GM12878 (cell line): ENCODE measurements at regions of chr10 and their contacts with region 1.

Region 1: DNA sequence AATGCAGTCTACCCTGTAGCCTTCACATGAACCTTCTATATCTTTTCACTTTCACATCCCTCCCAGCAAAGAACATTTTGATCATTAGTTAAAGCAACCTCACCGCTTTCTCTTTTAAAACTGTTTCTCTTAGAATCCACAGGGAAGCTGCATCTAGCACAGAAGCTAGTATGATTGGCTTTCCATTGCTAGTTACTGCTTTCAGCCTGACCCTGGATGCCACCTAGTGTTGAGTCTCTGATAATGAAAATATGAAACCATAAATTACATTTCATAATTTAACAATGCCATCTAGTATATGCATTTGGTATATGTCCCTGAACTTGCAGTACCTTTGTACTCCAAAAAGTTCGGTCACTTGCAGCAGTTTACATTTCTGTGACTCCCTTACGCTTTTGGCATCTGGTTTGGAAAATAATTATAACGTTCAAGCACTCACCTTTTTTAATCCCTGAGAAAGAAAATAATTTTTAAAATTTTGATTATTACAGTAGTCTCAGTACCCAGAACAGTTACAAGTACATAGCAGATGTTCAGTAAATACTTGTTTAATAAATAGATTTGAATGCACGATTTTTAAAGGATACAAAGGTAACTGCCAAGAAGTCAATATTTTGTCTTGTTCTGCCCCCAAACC is 22.7 kb downstream of the CISD1 start:
- DNase-seq: no peak
- ATAC-seq: peak; percentile 91
- H3K4me3 ChIP-seq: no peak overlapping the region
- H3K27ac ChIP-seq: no peak overlapping the region
- H3K4me1 ChIP-seq: no peaks in the 10 kb centered on the region
- H3K27me3 ChIP-seq: no peaks in the 10 kb centered on the region
- CTCF ChIP-seq: peak; percentile 65 to 78 (median 71); a peak in 5 of 6 replicates
- EP300 ChIP-seq: no peak
- POLR2A ChIP-seq: no peak
- RAD21 ChIP-seq: peak; percentile 94

Region 2: GRCh38 chr10:56943221-56943755 is 1348.4 kb before region 1 on chr10:
- CTCF ChIA-PET with region 1: no interaction called
- POLR2A ChIA-PET with region 1: no interaction called
- RAD21 ChIA-PET with region 1: no interaction called
- SMC1A ChIA-PET with region 1: no interaction called
- in situ Hi-C with region 1: no loop called
- intact Hi-C with region 1: no loop called
- DNase-seq: no peak
- ATAC-seq: no peak
- H3K4me3 ChIP-seq: no peak overlapping the region
- H3K27ac ChIP-seq: no peak overlapping the region
- H3K4me1 ChIP-seq: no peaks in the 10 kb centered on the region
- H3K27me3 ChIP-seq: no peaks in the 10 kb centered on the region
- CTCF ChIP-seq: no peak
- EP300 ChIP-seq: no peak
- POLR2A ChIP-seq: no peak
- RAD21 ChIP-seq: no peak

Region 3: DNA sequence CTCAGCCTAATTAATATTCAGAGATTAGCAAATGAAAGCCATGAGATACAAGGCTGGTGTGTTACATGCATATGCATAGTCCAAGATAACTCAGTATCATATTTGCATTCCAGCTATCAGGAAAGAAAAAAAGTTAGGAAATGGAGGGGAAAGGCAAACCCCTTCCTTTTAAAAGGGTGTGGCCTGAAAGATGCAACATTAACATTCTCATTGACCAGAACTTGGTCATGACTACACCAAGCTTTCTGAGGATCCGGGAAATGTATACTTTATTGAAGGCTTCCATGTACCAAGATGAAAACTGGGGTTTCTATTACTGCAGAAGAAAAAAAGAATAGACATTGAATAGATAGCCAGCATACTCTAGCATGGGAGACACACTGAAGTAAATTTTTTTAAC is 120.5 kb before region 1 on chr10:
- CTCF ChIA-PET with region 1: interaction called, 385 read pairs
- POLR2A ChIA-PET with region 1: no interaction called
- RAD21 ChIA-PET with region 1: interaction called, 144 read pairs
- SMC1A ChIA-PET with region 1: interaction called, 203 read pairs
- in situ Hi-C with region 1: no loop called
- intact Hi-C with region 1: no loop called
- DNase-seq: no peak
- ATAC-seq: no peak
- H3K4me3 ChIP-seq: no peak overlapping the region
- H3K27ac ChIP-seq: no peak overlapping the region
- H3K4me1 ChIP-seq: no peaks in the 10 kb centered on the region
- H3K27me3 ChIP-seq: no peaks in the 10 kb centered on the region
- CTCF ChIP-seq: no peak
- EP300 ChIP-seq: no peak
- POLR2A ChIP-seq: no peak
- RAD21 ChIP-seq: no peak

Region 4: GRCh38 chr10:58184120-58184670 is 107.5 kb before region 1 on chr10:
- CTCF ChIA-PET with region 1: interaction called, 385 read pairs
- POLR2A ChIA-PET with region 1: interaction called, 3 read pairs
- RAD21 ChIA-PET with region 1: interaction called, 144 read pairs
- SMC1A ChIA-PET with region 1: interaction called, 203 read pairs
- in situ Hi-C with region 1: loop called (anchors 5 kb)
- intact Hi-C with region 1: no loop called
- DNase-seq: no peak
- ATAC-seq: no peak
- H3K4me3 ChIP-seq: no peak overlapping the region
- H3K27ac ChIP-seq: no peak overlapping the region
- H3K4me1 ChIP-seq: no peaks in the 10 kb centered on the region
- H3K27me3 ChIP-seq: no peaks in the 10 kb centered on the region
- CTCF ChIP-seq: no peak
- EP300 ChIP-seq: no peak
- POLR2A ChIP-seq: no peak
- RAD21 ChIP-seq: no peak

Region 5: DNA sequence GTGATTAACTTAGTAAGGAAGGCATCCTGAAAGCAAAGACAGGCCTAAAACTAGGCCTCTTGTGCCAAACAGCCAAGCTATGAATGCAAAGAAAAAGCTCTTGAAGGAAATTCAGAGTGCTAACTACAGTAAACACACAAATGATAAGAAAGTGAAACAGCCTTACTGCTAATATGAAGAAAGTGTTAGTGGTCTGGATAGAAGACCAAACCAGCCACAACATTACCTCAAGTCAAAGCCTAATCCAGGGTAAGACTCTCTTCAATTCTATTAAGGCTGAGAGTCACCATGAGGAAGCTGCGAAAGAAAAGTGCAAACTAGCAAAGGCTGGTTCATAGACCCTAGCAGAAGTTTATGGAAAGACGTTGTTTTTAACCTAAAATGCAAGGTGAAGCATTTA is 90.0 kb before region 1 on chr10:
- CTCF ChIA-PET with region 1: interaction called, 12 read pairs
- POLR2A ChIA-PET with region 1: no interaction called
- RAD21 ChIA-PET with region 1: interaction called, 6 read pairs
- SMC1A ChIA-PET with region 1: interaction called, 14 read pairs
- in situ Hi-C with region 1: no loop called
- intact Hi-C with region 1: no loop called
- DNase-seq: peak; percentile 4
- ATAC-seq: peak; percentile 59
- H3K4me3 ChIP-seq: no peak overlapping the region
- H3K27ac ChIP-seq: no peak overlapping the region
- H3K4me1 ChIP-seq: no peaks in the 10 kb centered on the region
- H3K27me3 ChIP-seq: no peaks in the 10 kb centered on the region
- CTCF ChIP-seq: no peak
- EP300 ChIP-seq: no peak
- POLR2A ChIP-seq: no peak
- RAD21 ChIP-seq: no peak

Region 6: DNA sequence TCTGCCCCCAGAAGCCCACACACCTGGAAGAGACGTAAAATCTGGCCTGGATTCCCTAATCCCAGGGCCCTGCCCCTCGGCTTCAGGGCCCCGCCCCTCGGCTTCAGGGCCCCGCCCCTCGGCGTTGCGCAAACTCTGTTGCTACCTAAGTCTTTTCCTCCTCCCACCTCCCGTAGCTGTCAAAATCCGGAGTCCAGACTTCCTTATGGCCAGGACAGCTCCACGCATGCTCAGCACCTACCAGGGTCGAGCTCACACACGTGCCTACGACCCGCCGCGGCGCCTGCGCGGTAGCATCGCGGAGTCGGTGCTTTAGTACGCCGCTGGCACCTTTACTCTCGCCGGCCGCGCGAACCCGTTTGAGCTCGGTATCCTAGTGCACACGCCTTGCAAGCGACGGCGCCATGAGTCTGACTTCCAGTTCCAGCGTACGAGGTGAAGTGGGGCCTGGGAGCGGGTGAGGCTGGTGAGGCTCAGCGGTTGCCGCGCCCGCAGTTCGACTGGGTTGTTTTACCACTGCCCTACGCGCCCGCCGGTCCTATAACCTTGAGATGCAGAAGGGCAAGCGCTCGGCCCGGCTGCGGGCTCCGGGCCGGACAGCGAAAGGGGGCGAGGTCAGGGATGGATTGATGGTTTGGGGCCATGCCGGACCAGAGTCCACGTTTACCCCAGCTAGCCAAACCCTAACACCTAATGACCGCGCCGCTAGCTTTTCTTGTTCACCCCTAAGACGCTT is 22.6 kb before region 1 on chr10 and contains the start of gene CISD1:
- CTCF ChIA-PET with region 1: interaction called, 12 read pairs
- POLR2A ChIA-PET with region 1: interaction called, 8 read pairs
- RAD21 ChIA-PET with region 1: interaction called, 20 read pairs
- SMC1A ChIA-PET with region 1: interaction called, 26 read pairs
- in situ Hi-C with region 1: no loop called
- intact Hi-C with region 1: no loop called
- DNase-seq: peak; percentile 96
- ATAC-seq: peak; percentile 76
- H3K4me3 ChIP-seq: peak within 1 kb of the TSS; percentile 76
- H3K27ac ChIP-seq: peak within 1 kb of the TSS; percentile 86
- H3K4me1 ChIP-seq: 0 out of 2 replicates have a peak, but pooled peaks cover 5% of the 10 kb centered on the region
- H3K27me3 ChIP-seq: no peaks in the 10 kb centered on the region
- CTCF ChIP-seq: no peak
- EP300 ChIP-seq: no peak
- POLR2A ChIP-seq: peak; percentile 93
- RAD21 ChIP-seq: no peak
- polyA plus RNA-seq, gene CISD1: 156 to 162 TPM

Region 7: DNA sequence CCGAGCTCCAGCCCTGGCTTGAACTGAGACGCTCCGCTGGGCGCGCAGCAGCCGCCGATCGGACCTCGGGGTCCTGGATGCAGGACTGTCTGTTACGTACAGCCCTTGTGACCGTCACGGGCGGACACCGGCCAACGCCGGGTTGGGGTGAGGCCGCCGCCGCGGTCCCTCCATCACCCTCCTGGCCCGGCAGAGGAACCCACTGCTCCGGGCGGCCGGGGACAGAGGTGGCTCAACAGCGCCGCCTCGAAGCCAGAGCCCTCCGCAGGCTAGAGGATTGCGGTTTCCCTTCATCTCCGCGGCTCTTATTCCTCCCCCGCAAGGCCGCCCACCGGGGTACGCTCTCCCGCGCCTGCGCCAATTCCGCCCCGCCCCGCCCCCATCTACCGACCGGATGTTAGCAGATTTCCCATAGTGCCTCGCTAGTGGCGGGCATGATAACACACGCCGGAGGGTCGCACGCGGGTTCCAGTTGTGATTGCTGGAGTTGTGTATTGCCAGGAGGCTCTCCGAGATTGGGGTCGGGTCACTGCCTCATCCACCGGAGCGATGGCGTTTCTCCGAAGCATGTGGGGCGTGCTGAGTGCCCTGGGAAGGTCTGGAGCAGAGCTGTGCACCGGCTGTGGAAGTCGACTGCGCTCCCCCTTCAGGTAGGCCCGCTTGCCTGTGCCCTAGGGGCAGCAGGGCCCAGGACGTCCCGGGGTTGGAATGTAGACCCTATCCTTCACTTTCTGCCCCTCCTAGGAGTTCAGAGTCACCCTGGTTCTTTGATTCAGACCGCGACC is 93.5 kb after region 1 on chr10 and contains the start of gene TFAM:
- CTCF ChIA-PET with region 1: interaction called, 12 read pairs
- POLR2A ChIA-PET with region 1: no interaction called
- RAD21 ChIA-PET with region 1: interaction called, 9 read pairs
- SMC1A ChIA-PET with region 1: interaction called, 22 read pairs
- in situ Hi-C with region 1: no loop called
- intact Hi-C with region 1: no loop called
- DNase-seq: peak; percentile 66
- ATAC-seq: peak; percentile 90
- H3K4me3 ChIP-seq: peak within 1 kb of the TSS; percentile 85
- H3K27ac ChIP-seq: peak within 1 kb of the TSS; percentile 88
- H3K4me1 ChIP-seq: peaks cover 5% of the 10 kb centered on the region
- H3K27me3 ChIP-seq: no peaks in the 10 kb centered on the region
- CTCF ChIP-seq: peak; percentile 49 to 67 (median 61)
- EP300 ChIP-seq: peak in 1 of 2 experiments; percentile 30; a peak in 1 of 4 replicates
- POLR2A ChIP-seq: peak; percentile 99
- RAD21 ChIP-seq: peak; percentile 70
- polyA plus RNA-seq, gene TFAM: 96.1 to 114 TPM